Uterus (tissue), 4 donors: ENCODE measurements at regions of chr19 and their contacts with region 1.

Region 1: DNA sequence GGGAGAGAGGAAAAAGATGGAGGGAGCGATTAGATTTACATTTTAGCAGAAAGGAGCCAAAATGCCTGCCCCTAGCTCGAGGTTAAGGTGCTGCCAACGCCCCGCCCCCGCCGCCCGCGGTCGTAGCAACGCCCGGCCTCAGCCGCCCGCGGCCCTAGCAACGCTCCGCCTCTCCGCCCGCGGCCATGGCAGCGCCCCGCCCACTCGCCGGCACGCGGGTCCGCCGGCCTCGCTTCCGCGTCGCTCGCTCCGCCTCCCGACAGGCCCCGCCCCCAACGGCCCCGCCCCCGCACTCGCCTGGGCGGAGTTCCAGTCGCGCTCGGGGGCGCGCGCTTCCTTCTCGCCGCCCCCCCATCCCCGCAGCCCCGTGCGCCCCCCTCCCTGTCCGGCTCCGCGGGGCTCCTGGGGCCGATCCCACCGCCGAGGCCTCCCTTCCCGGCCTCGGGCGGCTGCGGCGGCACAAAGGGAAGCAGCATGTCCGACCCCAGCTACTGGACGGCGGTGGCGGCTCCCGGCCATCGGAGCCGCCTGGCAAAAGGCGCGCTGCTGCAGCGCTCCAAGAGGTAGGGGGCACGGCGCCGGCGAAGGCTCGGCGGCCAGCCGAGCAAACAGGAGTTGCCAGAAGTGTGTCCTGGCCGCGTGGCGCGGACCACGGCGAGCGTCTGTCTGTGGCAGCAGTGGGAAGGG is 20.3 kb downstream of the MAST3 start:
- DNase-seq: peak; percentile 84 to 94
- H3K4me3 ChIP-seq: peak overlapping the region; percentile 53 to 77
- H3K27ac ChIP-seq: peak overlapping the region; percentile 56 to 79
- H3K4me1 ChIP-seq: peaks cover 0 to 9% of the 10 kb centered on the region in 2 donors
- H3K27me3 ChIP-seq: no peaks in the 10 kb centered on the region
- CTCF ChIP-seq: no peak
- POLR2A ChIP-seq: no peak

Region 2: GRCh38 chr19:17985037-17985818 is 132.6 kb before region 1 on chr19:
- intact Hi-C with region 1: no loop called
- DNase-seq: no peak
- H3K4me3 ChIP-seq: no peak overlapping the region
- H3K27ac ChIP-seq: no peak overlapping the region
- H3K4me1 ChIP-seq: no peaks in the 10 kb centered on the region
- H3K27me3 ChIP-seq: no peaks in the 10 kb centered on the region
- CTCF ChIP-seq: no peak
- POLR2A ChIP-seq: no peak

Region 3: DNA sequence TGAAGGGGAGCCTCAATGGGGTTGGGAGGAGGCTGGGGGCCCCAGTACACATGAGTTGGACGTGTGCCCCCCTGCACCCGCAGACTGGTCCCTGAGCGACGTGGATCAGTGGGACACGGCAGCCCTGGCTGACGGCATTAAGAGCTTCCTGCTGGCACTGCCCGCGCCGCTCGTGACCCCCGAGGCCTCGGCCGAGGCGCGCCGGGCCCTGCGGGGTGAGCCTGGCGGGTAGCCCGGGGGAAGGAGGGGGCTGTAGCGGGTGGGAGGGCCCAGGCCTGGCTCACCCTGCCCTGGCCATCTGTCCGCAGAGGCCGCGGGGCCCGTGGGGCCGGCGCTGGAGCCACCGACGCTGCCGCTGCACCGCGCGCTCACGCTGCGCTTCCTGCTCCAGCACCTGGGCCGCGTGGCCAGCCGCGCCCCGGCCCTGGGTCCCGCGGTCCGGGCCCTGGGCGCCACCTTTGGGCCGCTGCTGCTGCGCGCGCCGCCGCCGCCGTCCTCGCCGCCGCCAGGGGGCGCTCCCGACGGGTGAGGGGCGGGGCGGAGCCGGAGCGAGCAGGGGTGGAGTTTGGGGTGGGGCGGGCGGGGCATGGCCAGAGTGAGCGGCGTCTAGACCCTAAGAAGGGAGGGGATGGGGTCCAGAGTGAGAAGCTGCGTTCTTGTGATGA is 43.3 kb after region 1 on chr19:
- intact Hi-C with region 1: loop called (anchors 5 kb)
- DNase-seq: peak; percentile 58 to 78
- H3K4me3 ChIP-seq: peak overlapping the region; percentile 13 to 40
- H3K27ac ChIP-seq: peak overlapping the region; percentile 82 to 89
- H3K4me1 ChIP-seq: peaks cover 0 to 26% of the 10 kb centered on the region in 2 donors
- H3K27me3 ChIP-seq: no peaks in the 10 kb centered on the region
- CTCF ChIP-seq: peak; percentile 24 to 96 (median 84)
- POLR2A ChIP-seq: no peak

Region 4: DNA sequence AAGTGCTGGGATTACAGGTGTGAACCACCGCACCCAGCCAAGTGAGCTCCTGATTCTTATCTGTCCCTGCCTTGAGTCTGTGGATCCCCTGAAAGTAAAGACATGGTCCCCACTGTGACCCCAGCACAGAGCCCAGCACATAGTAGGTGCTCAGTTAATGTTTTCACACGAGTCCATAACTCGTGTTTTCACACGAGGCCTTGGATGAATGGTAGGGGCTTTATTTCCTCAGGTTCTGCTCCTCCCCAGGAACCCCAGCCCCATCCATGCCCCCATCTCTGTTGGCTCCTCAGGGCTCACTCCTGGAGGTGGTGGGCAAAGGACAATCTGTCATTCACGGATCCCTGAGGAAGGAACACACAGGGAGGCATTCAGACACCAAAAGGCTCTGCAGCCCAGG is 132.0 kb after region 1 on chr19:
- intact Hi-C with region 1: loop called (anchors 10 kb)
- DNase-seq: no peak
- H3K4me3 ChIP-seq: no peak overlapping the region
- H3K27ac ChIP-seq: no peak overlapping the region
- H3K4me1 ChIP-seq: no peaks in the 10 kb centered on the region
- H3K27me3 ChIP-seq: no peaks in the 10 kb centered on the region
- CTCF ChIP-seq: no peak
- POLR2A ChIP-seq: no peak